H1 (cell line): ENCODE measurements at regions of chr1 and their contacts with region 1.

Region 1: DNA sequence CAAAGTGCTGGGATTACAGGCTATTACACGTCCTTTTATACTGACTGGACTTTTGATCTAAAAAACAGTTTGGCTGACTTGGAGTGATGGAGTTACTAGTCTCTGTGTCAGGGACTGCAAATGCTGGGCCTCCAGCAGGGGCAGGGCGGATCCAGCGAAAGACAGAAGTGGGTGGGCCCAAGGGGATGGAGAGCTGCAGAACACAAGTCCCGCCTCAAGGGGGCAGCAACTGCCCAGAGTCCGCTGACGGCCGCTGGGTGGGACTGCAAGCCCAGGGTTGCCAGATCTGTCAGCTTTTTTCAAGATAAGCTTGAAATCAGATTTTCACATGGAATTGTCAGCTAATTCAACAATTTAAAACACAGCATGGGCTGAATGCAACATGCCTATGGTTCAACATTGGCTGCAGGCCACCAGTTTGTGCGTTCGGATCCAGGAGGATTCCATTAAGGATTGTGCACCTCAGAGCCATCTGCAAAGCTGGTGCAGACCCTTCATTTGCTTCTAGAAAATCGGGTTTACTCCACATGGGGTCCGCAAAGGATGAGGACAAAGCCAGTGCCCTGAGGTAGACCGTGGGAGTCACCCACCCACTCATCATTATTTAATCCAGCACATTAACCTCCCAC is 10.7 kb downstream of the STMN1 start:
- DNase-seq: peak; percentile 79 to 96
- H3K4me3 ChIP-seq: no peak overlapping the region
- H3K27ac ChIP-seq: no peak overlapping the region
- H3K4me1 ChIP-seq: peaks cover 0 to 16% (median 9%) of the 10 kb centered on the region in 4 experiments; a peak in 6 of 7 replicates
- H3K27me3 ChIP-seq: no peaks in the 10 kb centered on the region
- CTCF ChIP-seq: peak; percentile 95 to 100 (median 99)
- EP300 ChIP-seq: no peak
- POLR2A ChIP-seq: no peak
- RAD21 ChIP-seq: peak; percentile 94 to 98

Region 2: GRCh38 chr1:25760122-25760719 is 135.3 kb before region 1 on chr1:
- CTCF ChIA-PET with region 1: no interaction called
- POLR2A ChIA-PET with region 1: no interaction called
- DNase-seq: no peak
- H3K4me3 ChIP-seq: no peak overlapping the region
- H3K27ac ChIP-seq: no peak overlapping the region
- H3K4me1 ChIP-seq: peaks cover 0 to 16% (median 7%) of the 10 kb centered on the region in 4 experiments; a peak in 5 of 7 replicates
- H3K27me3 ChIP-seq: no peaks in the 10 kb centered on the region
- CTCF ChIP-seq: no peak
- EP300 ChIP-seq: no peak
- POLR2A ChIP-seq: no peak
- RAD21 ChIP-seq: no peak

Region 3: DNA sequence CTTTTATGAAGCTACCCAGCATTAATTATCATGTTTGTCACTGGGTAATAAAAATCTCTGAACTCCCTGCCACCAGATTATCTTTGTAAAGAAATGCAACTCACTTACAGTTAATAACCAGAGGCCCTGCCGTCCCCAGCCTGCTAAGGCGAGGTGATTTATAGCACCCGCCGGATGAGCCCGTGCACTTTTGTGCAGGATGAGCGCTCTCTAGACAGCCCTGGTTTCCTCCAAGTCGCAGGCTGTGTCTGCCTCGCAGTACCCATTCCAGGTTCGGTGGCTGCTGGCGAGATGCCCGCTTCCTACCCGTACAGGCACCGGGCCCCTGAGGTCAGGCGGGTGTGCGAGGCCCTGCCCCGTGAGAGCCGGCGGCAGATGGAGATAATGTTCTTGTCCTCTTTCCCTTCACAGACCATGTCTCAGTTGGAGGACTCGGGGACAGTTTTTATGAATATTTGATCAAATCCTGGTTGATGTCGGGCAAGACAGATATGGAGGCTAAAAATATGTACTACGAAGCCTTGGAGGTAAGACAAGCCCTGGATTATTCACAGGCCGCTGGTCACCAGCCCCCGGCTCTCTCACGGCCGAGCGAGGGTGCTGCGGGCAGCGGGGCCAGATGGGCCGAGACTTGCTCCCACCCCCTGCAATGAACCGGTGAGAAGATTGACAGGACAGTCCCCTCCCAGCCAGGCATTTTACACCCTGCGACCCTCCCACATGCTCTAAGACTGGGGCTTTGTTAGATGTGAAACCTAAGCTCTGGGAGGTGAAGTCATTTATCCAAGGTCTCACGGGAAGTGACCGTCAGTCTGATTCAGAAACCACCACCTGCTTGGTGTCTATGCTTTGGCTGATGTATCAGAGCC is 124.0 kb before region 1 on chr1:
- CTCF ChIA-PET with region 1: no interaction called
- POLR2A ChIA-PET with region 1: no interaction called
- DNase-seq: no peak
- H3K4me3 ChIP-seq: no peak overlapping the region
- H3K27ac ChIP-seq: no peak overlapping the region
- H3K4me1 ChIP-seq: peaks cover 0 to 9% (median 3%) of the 10 kb centered on the region in 4 experiments; a peak in 4 of 7 replicates
- H3K27me3 ChIP-seq: no peaks in the 10 kb centered on the region
- CTCF ChIP-seq: no peak
- EP300 ChIP-seq: no peak
- POLR2A ChIP-seq: no peak
- RAD21 ChIP-seq: no peak

Region 4: GRCh38 chr1:25829046-25829445 is 66.4 kb before region 1 on chr1:
- CTCF ChIA-PET with region 1: interaction called, 12 read pairs
- POLR2A ChIA-PET with region 1: interaction called, 3 read pairs
- DNase-seq: no peak
- H3K4me3 ChIP-seq: no peak overlapping the region
- H3K27ac ChIP-seq: no peak overlapping the region
- H3K4me1 ChIP-seq: no peaks in the 10 kb centered on the region
- H3K27me3 ChIP-seq: no peaks in the 10 kb centered on the region
- CTCF ChIP-seq: no peak
- EP300 ChIP-seq: no peak
- POLR2A ChIP-seq: no peak
- RAD21 ChIP-seq: no peak

Region 5: DNA sequence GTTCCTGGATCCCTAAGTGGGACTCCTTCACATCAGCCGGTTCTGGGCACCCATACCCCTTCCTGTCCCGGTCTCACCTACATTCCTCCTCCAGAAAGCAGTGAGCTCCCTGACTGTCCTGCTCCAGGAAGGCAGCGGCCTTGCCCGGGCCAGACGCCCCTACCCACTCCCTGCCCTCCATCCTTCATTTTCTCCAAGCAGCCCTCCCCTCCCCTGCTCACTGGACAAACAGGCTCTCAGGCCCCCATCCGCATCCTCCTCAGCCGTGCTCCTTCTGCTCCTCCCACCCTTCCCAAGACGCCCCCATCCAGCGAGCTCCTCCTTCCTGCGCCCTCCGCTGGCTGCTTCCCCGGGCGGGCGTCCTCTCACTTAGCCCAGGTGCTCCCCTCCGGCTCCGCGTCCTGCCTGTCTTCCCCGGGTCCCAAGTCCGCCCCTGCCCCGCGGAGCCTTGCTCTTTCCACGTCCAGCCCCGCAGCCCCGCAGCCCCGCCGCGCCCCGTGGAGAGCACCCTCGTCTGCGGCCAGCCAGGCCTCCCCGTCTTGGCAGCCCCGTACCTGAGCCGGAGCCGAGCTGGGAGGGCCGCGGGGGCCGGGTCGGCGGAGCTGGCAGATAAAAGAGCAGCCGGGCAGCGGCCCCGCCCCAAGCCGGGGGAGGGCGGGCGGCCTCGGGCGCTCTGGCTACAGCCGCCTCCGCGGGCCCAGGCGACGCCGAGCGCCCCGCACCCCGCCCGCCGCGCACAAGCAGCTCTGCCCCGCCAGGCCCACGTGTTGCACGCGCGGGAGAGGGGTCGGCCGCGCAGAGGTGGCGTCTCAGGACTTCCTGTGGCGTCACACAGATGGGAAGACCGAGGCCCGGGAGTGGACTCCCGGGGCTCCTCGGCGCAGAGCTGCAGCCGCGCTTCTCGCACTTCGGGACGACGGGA is 20.3 kb before region 1 on chr1 and contains the start of gene PAQR7:
- CTCF ChIA-PET with region 1: interaction called, 25 read pairs
- POLR2A ChIA-PET with region 1: interaction called, 29 read pairs
- DNase-seq: peak in 1 of 2 experiments; percentile 86
- H3K4me3 ChIP-seq: peak within 1 kb of the TSS; percentile 26 to 69 (median 48)
- H3K27ac ChIP-seq: 0 out of 2 replicates have a peak within 1 kb of the TSS, but pooled peaks have one; percentile 8
- H3K4me1 ChIP-seq: peaks cover 0 to 13% (median 11%) of the 10 kb centered on the region in 4 experiments; a peak in 5 of 7 replicates
- H3K27me3 ChIP-seq: peaks cover 0 to 3% (median 1%) of the 10 kb centered on the region in 4 experiments; a peak in 4 of 7 replicates
- CTCF ChIP-seq: peak in 1 of 3 experiments; percentile 4; a peak in 1 of 4 replicates
- EP300 ChIP-seq: no peak
- POLR2A ChIP-seq: peak in 1 of 2 experiments; percentile 48; a peak in 1 of 3 replicates
- RAD21 ChIP-seq: no peak
- total RNA-seq, gene PAQR7: 7.3 and 7.7 TPM in 2 replicates

Region 6: DNA sequence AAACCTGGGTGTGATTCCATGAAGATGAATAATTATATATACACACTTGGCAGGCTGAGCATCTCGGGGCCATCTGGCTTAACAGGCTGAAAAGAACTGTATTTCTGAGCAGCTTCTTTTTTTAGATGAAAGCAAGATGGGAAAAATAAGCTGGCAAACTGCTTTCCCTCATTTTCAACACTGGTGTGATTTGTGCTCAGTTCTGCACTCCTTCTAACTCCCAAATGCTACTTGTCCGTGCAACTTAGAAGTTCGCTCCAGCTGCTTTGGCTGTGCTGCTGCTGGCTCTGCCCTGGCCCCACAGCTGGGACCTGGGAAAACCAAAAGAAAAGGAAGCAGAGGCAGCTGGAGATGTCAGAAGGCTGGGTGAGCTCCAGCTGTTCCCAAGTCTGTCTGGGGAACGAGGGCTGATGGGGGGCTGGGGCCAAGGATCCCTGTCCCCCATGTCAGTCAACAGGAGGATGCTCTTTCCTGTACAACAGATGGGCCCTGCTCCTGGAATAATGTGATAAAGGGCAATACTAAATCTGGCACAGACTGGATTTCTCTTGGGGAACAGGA is 57.4 kb after region 1 on chr1:
- CTCF ChIA-PET with region 1: interaction called, 37 read pairs
- POLR2A ChIA-PET with region 1: interaction called, 3 read pairs
- DNase-seq: no peak
- H3K4me3 ChIP-seq: no peak overlapping the region
- H3K27ac ChIP-seq: no peak overlapping the region
- H3K4me1 ChIP-seq: peaks cover 0 to 5% (median 3%) of the 10 kb centered on the region in 4 experiments; a peak in 2 of 7 replicates
- H3K27me3 ChIP-seq: no peaks in the 10 kb centered on the region
- CTCF ChIP-seq: no peak
- EP300 ChIP-seq: no peak
- POLR2A ChIP-seq: no peak
- RAD21 ChIP-seq: no peak

Region 7: GRCh38 chr1:25977801-25978200 is 82.3 kb after region 1 on chr1:
- CTCF ChIA-PET with region 1: interaction called, 10 read pairs
- POLR2A ChIA-PET with region 1: interaction called, 3 read pairs
- DNase-seq: no peak
- H3K4me3 ChIP-seq: no peak overlapping the region
- H3K27ac ChIP-seq: no peak overlapping the region
- H3K4me1 ChIP-seq: no peaks in the 10 kb centered on the region
- H3K27me3 ChIP-seq: no peaks in the 10 kb centered on the region
- CTCF ChIP-seq: no peak
- EP300 ChIP-seq: no peak
- POLR2A ChIP-seq: no peak
- RAD21 ChIP-seq: no peak

Region 8: DNA sequence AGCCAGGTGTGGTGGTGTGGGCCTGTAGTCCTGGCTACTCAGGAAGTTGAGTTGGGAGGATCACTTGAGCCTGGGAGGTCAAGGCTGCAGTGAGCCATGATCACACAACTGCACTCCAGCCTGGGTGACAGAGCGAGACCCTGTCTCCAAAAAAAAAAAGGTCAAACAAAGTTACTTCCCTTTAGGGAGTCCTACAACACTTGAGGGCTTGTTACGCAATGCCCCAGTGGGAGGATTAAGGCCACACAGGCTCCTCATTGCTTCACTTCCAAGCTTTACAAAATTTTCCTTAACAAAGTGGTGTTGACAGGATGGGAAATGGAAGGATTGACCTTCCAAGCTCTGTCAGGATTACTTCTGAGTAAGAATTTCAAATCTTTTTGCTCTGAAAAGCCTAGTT is 119.9 kb after region 1 on chr1:
- CTCF ChIA-PET with region 1: interaction called, 66 read pairs
- POLR2A ChIA-PET with region 1: no interaction called
- DNase-seq: no peak
- H3K4me3 ChIP-seq: no peak overlapping the region
- H3K27ac ChIP-seq: no peak overlapping the region
- H3K4me1 ChIP-seq: peaks cover 0 to 8% (median 4%) of the 10 kb centered on the region in 4 experiments; a peak in 6 of 7 replicates
- H3K27me3 ChIP-seq: no peaks in the 10 kb centered on the region
- CTCF ChIP-seq: no peak
- EP300 ChIP-seq: no peak
- POLR2A ChIP-seq: no peak
- RAD21 ChIP-seq: no peak

Region 9: DNA sequence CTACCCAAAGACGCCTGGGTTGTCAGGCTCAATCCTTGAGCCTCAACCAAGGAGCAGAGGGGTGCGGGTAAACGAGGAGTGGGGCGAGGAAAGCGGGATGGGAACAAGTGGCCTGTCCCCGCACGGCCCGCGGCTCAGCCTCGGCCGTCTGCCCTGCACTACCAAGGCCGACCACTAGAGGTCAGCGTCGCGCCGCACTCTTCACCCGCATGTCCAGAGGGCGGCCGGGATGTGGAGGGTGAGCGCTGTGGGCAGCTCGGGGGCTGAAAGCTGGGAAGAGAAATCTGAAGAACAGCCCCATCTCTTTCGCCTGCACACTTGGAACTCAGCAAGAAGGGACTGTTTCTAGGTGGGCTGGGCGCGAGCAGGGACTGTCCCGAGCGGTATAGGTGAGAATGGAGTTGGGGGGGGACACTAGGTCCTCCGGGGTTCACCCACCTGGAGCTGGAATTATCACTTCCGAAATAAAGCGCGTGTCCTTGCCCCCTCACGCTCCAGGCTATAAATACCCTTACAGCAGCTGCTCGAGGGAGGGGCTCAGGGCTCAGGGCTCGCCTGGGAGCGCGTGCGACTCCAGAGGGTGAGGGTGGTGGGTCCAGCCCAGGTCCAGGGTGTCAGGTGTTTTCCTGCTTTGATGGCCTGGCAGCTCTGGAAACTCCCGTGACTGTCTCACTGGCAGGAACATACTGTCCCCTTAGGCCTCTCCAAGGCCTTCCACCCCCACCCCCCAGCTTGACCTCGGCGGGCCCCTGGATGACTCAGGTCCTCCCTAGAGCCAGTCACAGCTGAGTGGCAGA is 140.7 kb after region 1 on chr1:
- CTCF ChIA-PET with region 1: interaction called, 39 read pairs
- POLR2A ChIA-PET with region 1: interaction called, 3 read pairs
- DNase-seq: peak in 1 of 2 experiments; percentile 96
- H3K4me3 ChIP-seq: peak overlapping the region; percentile 39 to 85 (median 76)
- H3K27ac ChIP-seq: no peak overlapping the region
- H3K4me1 ChIP-seq: peaks cover 0 to 8% (median 6%) of the 10 kb centered on the region in 4 experiments; a peak in 5 of 7 replicates
- H3K27me3 ChIP-seq: peaks cover 6 to 26% (median 20%) of the 10 kb centered on the region in 4 experiments; a peak in 6 of 7 replicates
- CTCF ChIP-seq: peak; percentile 90 to 99 (median 93)
- EP300 ChIP-seq: no peak
- POLR2A ChIP-seq: no peak
- RAD21 ChIP-seq: peak; percentile 92 to 95